ENCODE measurements at regions of chr3 and their contacts with region 1.

Region 1: DNA sequence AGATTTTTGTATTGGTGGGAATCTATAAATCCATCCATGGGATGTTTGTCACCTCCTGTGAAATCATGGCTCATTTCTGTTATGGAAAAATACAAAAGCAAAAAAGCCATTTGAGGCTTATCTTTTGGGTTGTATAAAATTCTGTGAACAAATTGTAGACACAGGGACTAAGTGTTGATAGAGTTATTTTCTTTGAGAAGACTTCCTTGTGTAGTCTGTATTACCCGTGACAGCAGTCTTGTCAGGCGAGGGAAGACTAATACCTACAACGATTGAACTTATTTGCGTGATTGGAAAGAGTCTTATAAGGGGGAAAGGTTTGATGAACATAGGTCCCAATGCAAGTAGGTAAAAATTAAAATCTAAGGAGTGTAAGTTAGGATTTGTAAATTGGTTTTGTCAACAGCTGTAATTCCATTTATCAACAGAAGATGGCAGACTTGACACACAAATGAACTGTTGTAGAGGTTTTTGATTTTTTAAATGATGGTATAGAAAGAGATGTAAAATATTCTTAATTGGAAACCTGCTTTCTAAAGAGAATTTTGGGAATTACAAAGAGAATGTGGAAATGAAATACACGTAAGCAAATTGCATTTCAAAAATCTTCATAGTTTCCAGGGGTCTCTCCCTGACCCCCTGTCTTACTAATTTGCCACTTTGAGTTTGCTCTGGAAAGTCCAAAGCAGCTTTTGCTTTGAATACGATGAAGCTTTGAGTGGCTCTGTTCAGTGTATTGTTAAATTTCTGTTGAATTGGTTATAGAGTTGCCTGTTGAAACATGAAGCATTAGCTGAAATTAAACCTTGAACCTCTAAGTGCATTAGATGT is 33.2 kb downstream of the SLC25A26 start:
- DNase-seq: no peak
- H3K4me3 ChIP-seq: no peak overlapping the region; a peak in 1 of 4 replicates
- H3K27ac ChIP-seq: no peak overlapping the region
- H3K4me1 ChIP-seq: peaks cover 0 to 13% of the 10 kb centered on the region in 2 experiments; a peak in 1 of 4 replicates
- H3K27me3 ChIP-seq: no peaks in the 10 kb centered on the region
- CTCF ChIP-seq: peak; percentile 80
- EP300 ChIP-seq: no peak
- RAD21 ChIP-seq: peak; percentile 71

Region 2: DNA sequence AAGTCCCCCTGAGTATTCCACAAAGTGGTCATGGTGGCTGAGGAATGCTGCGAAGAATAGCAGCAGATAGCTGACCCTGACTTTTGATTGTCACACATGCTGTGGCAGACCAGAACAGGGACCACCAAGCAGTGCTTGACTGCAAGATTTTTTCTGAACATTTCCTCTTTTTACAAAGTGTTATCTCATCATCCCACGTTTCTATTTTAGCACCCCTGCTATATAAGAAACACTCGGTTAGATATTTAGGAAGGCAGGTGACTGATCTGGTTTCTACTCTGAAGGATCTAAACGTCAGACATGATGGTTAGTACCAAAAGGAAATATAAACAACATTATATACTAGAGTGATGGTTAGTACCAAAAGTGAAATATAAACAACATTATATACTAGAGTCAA is 24.1 kb before region 1 on chr3:
- CTCF ChIA-PET with region 1: interaction called, 11 read pairs
- POLR2A ChIA-PET with region 1: no interaction called
- DNase-seq: no peak
- H3K4me3 ChIP-seq: no peak overlapping the region
- H3K27ac ChIP-seq: no peak overlapping the region
- H3K4me1 ChIP-seq: peaks cover 0 to 9% of the 10 kb centered on the region in 2 experiments; a peak in 2 of 4 replicates
- H3K27me3 ChIP-seq: no peaks in the 10 kb centered on the region
- CTCF ChIP-seq: no peak
- EP300 ChIP-seq: no peak
- RAD21 ChIP-seq: no peak

Region 3: DNA sequence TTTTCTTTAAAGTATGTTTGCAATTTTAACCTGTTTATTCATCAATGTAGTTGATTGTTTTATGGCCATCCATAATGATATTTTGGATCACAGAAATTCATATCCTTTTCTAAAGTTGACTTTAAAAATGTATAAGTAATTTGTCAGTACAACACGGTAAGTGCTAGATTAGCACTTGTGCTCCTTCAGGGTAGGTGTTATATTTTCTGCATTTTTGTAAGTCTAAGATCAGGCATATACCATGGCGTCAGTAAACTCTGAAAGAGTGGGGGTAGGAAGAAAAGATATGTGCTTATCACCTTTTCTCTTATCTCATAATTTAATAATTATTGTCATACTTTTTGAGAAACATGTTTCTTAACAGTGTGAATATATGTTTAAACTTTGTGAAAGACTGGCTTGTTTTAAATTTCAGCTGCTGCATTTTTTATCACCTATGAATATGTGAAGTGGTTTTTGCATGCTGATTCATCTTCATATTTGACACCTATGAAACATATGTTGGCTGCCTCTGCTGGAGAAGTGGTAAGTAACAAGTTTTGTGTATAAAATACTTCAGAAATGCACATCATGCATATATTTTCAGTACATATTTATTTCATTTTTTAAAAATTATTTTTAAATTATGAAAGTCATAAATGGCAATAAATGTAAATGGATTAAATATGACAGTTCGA is 11.1 kb before region 1 on chr3:
- CTCF ChIA-PET with region 1: interaction called, 17 read pairs
- POLR2A ChIA-PET with region 1: no interaction called
- DNase-seq: no peak
- H3K4me3 ChIP-seq: no peak overlapping the region
- H3K27ac ChIP-seq: no peak overlapping the region
- H3K4me1 ChIP-seq: no peaks in the 10 kb centered on the region
- H3K27me3 ChIP-seq: no peaks in the 10 kb centered on the region
- CTCF ChIP-seq: no peak
- EP300 ChIP-seq: no peak
- RAD21 ChIP-seq: no peak

Region 4: DNA sequence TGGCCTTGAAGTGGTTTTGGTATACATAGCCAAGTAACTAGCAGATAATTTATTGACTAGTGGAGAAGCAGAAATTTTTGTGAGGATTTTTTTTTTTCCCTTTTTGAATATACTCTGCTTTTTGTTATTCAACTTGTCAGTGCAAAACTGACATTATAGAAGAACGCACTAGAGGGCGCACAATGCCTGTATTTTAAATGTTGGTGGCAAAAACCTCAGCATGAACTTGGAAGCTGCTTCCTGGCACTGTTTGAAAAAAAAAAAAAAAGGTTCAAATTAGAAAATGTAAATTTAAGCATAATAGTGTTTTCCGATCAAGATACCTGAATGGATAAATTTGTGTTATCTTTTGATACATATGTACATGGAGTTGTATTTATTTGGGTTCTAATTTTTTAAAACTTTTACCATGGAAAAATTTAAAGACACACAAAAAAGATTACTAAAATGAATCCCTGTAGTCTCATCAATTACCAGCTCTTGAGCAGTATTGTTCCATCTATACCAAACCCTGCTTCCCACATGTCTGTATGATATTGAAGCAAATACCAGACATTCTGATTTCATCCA is 22.8 kb after region 1 on chr3:
- CTCF ChIA-PET with region 1: interaction called, 26 read pairs
- POLR2A ChIA-PET with region 1: no interaction called
- DNase-seq: peak; percentile 46
- H3K4me3 ChIP-seq: no peak overlapping the region
- H3K27ac ChIP-seq: no peak overlapping the region
- H3K4me1 ChIP-seq: no peaks in the 10 kb centered on the region
- H3K27me3 ChIP-seq: no peaks in the 10 kb centered on the region
- CTCF ChIP-seq: peak; percentile 83
- EP300 ChIP-seq: no peak
- RAD21 ChIP-seq: peak; percentile 91

Region 5: GRCh38 chr3:66803206-66803605 is 549.2 kb after region 1 on chr3:
- CTCF ChIA-PET with region 1: interaction called, 12 read pairs
- POLR2A ChIA-PET with region 1: no interaction called
- DNase-seq: no peak
- H3K4me3 ChIP-seq: no peak overlapping the region; a peak in 1 of 4 replicates
- H3K27ac ChIP-seq: no peak overlapping the region
- H3K4me1 ChIP-seq: no peaks in the 10 kb centered on the region
- H3K27me3 ChIP-seq: no peaks in the 10 kb centered on the region
- CTCF ChIP-seq: no peak; the same call in 1 of the 2 replicates
- EP300 ChIP-seq: no peak
- RAD21 ChIP-seq: no peak

Region 6: GRCh38 chr3:66822186-66823008 is 568.4 kb after region 1 on chr3:
- CTCF ChIA-PET with region 1: interaction called, 67 read pairs
- POLR2A ChIA-PET with region 1: no interaction called
- DNase-seq: peak; percentile 39
- H3K4me3 ChIP-seq: peak overlapping the region in 1 of 2 experiments; percentile 2; a peak in 1 of 4 replicates
- H3K27ac ChIP-seq: no peak overlapping the region
- H3K4me1 ChIP-seq: no peaks in the 10 kb centered on the region
- H3K27me3 ChIP-seq: no peaks in the 10 kb centered on the region
- CTCF ChIP-seq: peak; percentile 72
- EP300 ChIP-seq: no peak
- RAD21 ChIP-seq: peak; percentile 55

Measured in SK-N-SH (cell line).